ENCODE measurements at regions of chr1 and their contacts with region 1.

Region 1: GRCh38 chr1:201361652-201362504 is 15.6 kb downstream of the TNNT2 start:
- DNase-seq: peak in 1 of 2 experiments; percentile 58
- H3K4me3 ChIP-seq: no peak overlapping the region
- H3K27ac ChIP-seq: no peak overlapping the region
- H3K4me1 ChIP-seq: no peaks in the 10 kb centered on the region
- H3K27me3 ChIP-seq: peaks cover 18% of the 10 kb centered on the region
- CTCF ChIP-seq: peak; percentile 95

Region 2: DNA sequence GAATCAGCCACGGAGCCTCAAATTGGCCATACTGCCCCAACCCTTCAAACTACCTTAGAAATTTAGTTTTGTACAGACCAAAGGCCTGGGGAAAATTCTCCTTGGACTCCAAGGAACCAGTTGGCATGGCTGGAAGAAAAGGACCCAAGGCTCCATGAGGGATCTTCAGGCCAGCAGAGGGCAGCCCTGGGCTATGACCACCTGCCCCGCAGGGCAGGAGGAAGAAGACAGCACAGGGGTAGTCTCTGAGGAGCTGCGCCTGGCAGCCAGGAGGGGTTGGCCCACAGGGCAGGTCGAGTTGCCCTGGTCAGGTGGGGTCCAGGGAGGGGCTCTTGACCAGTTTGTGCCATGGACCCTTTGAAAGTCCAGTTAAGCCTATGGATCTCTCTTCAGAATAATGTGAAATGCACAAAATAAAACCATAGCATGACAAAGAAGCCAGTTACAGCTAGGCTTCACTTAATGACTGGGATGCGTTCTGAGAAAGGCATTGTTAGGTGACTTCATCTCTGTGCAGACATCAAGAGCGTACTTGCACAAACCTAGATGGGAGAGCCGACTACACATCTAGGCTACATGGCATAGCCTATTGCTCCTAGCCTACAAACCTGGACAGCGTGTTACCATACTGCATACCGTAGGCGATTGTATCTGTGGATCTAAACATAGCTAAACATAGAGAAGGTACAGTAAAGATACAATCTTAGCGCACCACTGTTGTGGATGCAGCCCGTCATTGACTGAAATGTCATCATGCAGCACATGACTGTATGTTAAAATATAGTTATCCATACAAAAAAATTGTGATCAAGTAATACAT is 275.8 kb before region 1 on chr1:
- CTCF ChIA-PET with region 1: no interaction called
- POLR2A ChIA-PET with region 1: no interaction called
- intact Hi-C with region 1: loop called (anchors 2 kb)
- DNase-seq: peak; percentile 41 to 62
- H3K4me3 ChIP-seq: no peak overlapping the region
- H3K27ac ChIP-seq: no peak overlapping the region
- H3K4me1 ChIP-seq: no peaks in the 10 kb centered on the region
- H3K27me3 ChIP-seq: peaks cover 33% of the 10 kb centered on the region; the same call in 1 of the 2 replicates
- CTCF ChIP-seq: peak; percentile 75

Region 3: GRCh38 chr1:201288766-201289165 is 73.1 kb before region 1 on chr1:
- CTCF ChIA-PET with region 1: interaction called, 13 read pairs
- POLR2A ChIA-PET with region 1: no interaction called
- intact Hi-C with region 1: no loop called
- DNase-seq: no peak
- H3K4me3 ChIP-seq: no peak overlapping the region
- H3K27ac ChIP-seq: no peak overlapping the region
- H3K4me1 ChIP-seq: peaks cover 37% of the 10 kb centered on the region
- H3K27me3 ChIP-seq: no peaks in the 10 kb centered on the region
- CTCF ChIP-seq: no peak

Region 4: DNA sequence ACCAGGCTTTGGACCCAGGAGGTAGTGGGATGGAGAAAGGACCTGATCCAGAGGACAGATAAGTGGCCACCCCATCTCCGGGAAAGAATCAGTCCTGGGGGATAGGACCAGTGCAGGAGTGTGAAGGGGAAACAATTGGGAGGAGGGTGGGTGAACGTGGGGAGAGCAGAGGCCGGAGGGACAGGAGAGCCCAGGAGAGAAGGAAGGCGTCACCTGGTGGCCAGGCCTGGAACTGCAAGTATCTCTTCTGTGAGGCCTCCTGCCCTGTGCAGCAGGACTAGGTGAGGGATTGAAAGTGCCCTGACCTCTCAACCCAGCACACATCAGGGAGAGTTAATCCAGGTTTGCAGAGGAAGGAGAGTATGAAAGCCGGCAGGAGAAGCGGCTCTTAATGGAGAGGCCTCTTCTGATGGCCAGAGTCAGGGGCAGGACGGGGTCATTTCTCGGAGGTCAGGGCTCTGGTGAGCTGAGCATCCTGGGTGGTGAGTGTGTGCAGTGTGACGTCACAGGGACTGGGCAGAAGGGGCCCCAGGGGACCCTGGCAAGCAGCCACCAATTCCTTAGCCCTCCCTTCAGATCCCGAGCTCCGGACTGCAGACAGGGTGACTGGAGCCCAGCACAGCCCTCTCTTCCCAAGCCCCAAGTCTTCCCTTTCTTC is 46.4 kb after region 1 on chr1:
- CTCF ChIA-PET with region 1: interaction called, 5 read pairs
- POLR2A ChIA-PET with region 1: interaction called, 3 read pairs
- intact Hi-C with region 1: loop called (anchors 5 kb)
- DNase-seq: peak; percentile 67 to 84
- H3K4me3 ChIP-seq: no peak overlapping the region
- H3K27ac ChIP-seq: no peak overlapping the region
- H3K4me1 ChIP-seq: no peaks in the 10 kb centered on the region
- H3K27me3 ChIP-seq: peaks cover 9% of the 10 kb centered on the region; the same call in 1 of the 2 replicates
- CTCF ChIP-seq: peak; percentile 95

Region 5: DNA sequence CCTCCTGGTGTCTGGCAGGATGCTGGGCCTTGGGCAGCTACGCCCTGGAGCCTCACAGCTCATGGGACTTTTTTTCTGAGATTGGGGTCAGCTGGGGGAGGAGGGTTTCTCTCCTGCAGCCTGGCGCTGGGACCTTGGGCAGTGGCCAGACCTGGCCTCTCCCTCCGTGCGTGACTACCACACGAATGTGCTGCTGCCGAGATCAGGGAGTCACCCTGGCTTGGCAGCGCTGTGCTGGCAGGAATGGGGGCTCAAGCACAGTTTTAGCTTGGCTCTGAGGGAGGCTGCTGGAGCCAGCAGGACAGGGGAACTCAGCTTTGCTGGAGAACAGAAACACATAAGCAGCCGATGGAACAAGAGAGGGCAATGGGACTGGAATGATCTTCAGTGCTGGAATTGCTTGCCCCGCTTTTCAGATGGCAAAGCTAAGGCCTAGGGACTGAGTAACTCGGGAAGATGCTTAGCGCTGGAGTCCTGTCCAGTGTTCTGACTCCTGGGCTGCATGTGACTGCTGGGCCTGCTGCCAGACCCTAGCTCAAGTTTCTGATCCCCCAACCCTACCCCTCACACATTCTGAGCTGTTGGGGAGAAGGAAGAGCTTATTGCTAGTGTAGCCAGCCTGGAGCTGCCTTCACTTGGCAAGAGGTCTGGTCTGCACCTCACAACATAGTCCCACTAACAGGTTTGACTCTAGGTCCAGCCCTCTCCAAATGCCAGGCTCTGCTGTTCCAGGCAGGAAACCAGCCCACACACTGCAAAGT is 246.9 kb after region 1 on chr1:
- CTCF ChIA-PET with region 1: no interaction called
- POLR2A ChIA-PET with region 1: no interaction called
- intact Hi-C with region 1: no loop called
- DNase-seq: no peak
- H3K4me3 ChIP-seq: no peak overlapping the region
- H3K27ac ChIP-seq: no peak overlapping the region
- H3K4me1 ChIP-seq: no peaks in the 10 kb centered on the region
- H3K27me3 ChIP-seq: no peaks in the 10 kb centered on the region
- CTCF ChIP-seq: no peak